ENCODE measurements at regions of chr15 and their contacts with region 1.

Region 1: GRCh38 chr15:66698318-66698961 is 3.6 kb upstream of the SMAD6 start:
- DNase-seq: peak; percentile 77 to 84
- H3K4me3 ChIP-seq: no peak overlapping the region
- H3K27ac ChIP-seq: no peak overlapping the region
- H3K4me1 ChIP-seq: peaks cover 0 to 30% (median 23%) of the 10 kb centered on the region in 4 donors
- H3K27me3 ChIP-seq: peaks cover 0 to 9% (median 0%) of the 10 kb centered on the region in 3 donors
- CTCF ChIP-seq: peak in 5 of 7 experiments; percentile 29 to 79 (median 70)
- EP300 ChIP-seq: no peak
- POLR2A ChIP-seq: no peak

Region 2: GRCh38 chr15:66851226-66852071 is 153.0 kb after region 1 on chr15:
- intact Hi-C with region 1: loop called (anchors 5 kb)
- DNase-seq: peak; percentile 89 to 96
- H3K4me3 ChIP-seq: no peak overlapping the region
- H3K27ac ChIP-seq: peak overlapping the region in 4 of 5 donors; percentile 21 to 72 (median 41)
- H3K4me1 ChIP-seq: peaks cover 13 to 39% (median 19%) of the 10 kb centered on the region in 4 donors
- H3K27me3 ChIP-seq: no peaks in the 10 kb centered on the region
- CTCF ChIP-seq: peak in 5 of 7 experiments; percentile 94 to 98 (median 97)
- EP300 ChIP-seq: no peak
- POLR2A ChIP-seq: no peak

Measured in stomach (tissue), 19 donors.